ENCODE measurements at regions of chr12 and their contacts with region 1.

Region 1: DNA sequence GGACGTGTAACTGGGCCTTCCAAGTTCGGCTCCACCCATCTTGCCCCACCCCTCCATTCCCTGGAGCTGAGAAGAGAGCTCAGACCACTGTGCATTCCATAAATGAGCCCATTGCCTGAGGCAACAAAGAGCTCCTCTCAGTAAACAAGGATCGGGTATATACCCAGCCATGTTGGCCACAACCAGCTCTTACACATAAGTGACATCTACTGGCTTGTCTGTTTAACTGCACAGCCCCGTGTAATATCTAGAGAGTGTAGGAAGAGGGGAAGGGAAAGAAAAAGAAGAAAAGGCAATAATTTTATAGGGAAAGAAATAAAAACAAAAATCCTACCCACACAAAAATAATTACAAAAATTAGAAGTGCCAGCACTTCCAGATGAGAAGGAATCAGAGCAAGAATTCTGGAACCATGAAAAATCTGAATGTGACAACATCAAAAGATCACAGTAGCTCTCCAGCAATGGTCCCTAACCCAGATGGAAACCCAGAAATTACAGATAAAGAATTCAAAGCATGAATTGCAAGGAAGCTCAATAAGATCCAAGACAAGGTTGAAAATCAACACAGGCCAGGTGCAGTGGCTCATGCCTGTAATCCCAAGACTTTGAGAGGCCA is 308.1 kb downstream of the RPAP3 start:
- DNase-seq: peak; percentile 63
- ATAC-seq: peak; percentile 76
- H3K4me3 Mint-ChIP-seq: no peak overlapping the region
- H3K27ac Mint-ChIP-seq: peak overlapping the region; percentile 96
- H3K4me1 Mint-ChIP-seq: peaks cover 90% of the 10 kb centered on the region
- H3K27me3 Mint-ChIP-seq: no peaks in the 10 kb centered on the region
- CTCF ChIP-seq: peak; percentile 80

Region 2: GRCh38 chr12:47079468-47079980 is 318.2 kb before region 1 on chr12 and contains the starts of genes AMIGO2 and PCED1B:
- CTCF ChIA-PET with region 1: interaction called, 15 read pairs
- POLR2A ChIA-PET with region 1: interaction called, 7 read pairs
- intact Hi-C with region 1: loop called (anchors 10 kb)
- DNase-seq: peak; percentile 82
- ATAC-seq: peak; percentile 57
- H3K4me3 Mint-ChIP-seq: peak within 1 kb of the TSS; percentile 92
- H3K27ac Mint-ChIP-seq: peak within 1 kb of the TSS; percentile 97
- H3K4me1 Mint-ChIP-seq: peaks cover 72% of the 10 kb centered on the region
- H3K27me3 Mint-ChIP-seq: no peaks in the 10 kb centered on the region
- CTCF ChIP-seq: no peak
- total RNA-seq, gene AMIGO2: 12.1 to 12.5 TPM
- total RNA-seq, gene PCED1B: 117 to 119 TPM

Region 3: GRCh38 chr12:47216150-47216677 is 181.6 kb before region 1 on chr12:
- CTCF ChIA-PET with region 1: interaction called, 19 read pairs
- POLR2A ChIA-PET with region 1: interaction called, 37 read pairs
- intact Hi-C with region 1: loop called (anchors 2 kb)
- DNase-seq: peak; percentile 87
- ATAC-seq: peak; percentile 52
- H3K4me3 Mint-ChIP-seq: peak overlapping the region; percentile 79
- H3K27ac Mint-ChIP-seq: peak overlapping the region; percentile 96
- H3K4me1 Mint-ChIP-seq: peaks cover 10% of the 10 kb centered on the region
- H3K27me3 Mint-ChIP-seq: no peaks in the 10 kb centered on the region
- CTCF ChIP-seq: no peak

Region 4: GRCh38 chr12:47307680-47308399 is 89.9 kb before region 1 on chr12:
- CTCF ChIA-PET with region 1: interaction called, 18 read pairs
- POLR2A ChIA-PET with region 1: interaction called, 10 read pairs
- intact Hi-C with region 1: loop called (anchors 5 kb)
- DNase-seq: peak; percentile 74
- ATAC-seq: peak; percentile 88
- H3K4me3 Mint-ChIP-seq: peak overlapping the region; percentile 75
- H3K27ac Mint-ChIP-seq: peak overlapping the region; percentile 95
- H3K4me1 Mint-ChIP-seq: peaks cover 72% of the 10 kb centered on the region
- H3K27me3 Mint-ChIP-seq: no peaks in the 10 kb centered on the region
- CTCF ChIP-seq: peak; percentile 89

Region 5: DNA sequence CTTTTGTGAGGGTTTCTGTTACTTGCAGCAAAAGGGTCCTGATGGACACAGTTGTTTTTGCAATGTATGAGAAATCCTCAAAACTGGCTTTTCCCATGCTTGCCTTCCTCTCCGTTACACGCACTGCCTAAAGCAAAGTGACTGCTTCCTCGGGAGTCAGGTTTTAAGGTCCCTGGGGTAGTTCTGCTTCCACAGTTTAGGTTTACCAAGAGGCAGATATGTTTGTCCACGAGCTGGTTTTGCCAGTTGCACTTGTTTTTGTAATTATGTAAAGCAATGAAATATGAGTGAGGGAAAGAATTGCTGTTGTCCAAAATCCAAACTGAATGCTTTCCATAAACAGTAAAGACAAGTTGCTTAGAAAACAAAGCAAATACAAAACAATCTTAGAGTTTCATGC is 27.4 kb before region 1 on chr12:
- CTCF ChIA-PET with region 1: interaction called, 10 read pairs
- POLR2A ChIA-PET with region 1: interaction called, 4 read pairs
- intact Hi-C with region 1: no loop called
- DNase-seq: no peak
- ATAC-seq: no peak
- H3K4me3 Mint-ChIP-seq: no peak overlapping the region
- H3K27ac Mint-ChIP-seq: no peak overlapping the region
- H3K4me1 Mint-ChIP-seq: peaks cover 17% of the 10 kb centered on the region
- H3K27me3 Mint-ChIP-seq: no peaks in the 10 kb centered on the region
- CTCF ChIP-seq: no peak

Measured in activated CD8-positive, alpha-beta T cell treated with anti-CD3 and anti-CD28 coated beads for 36 hours (primary cell).